ENCODE measurements at regions of chr16 and their contacts with region 1.

Region 1: GRCh38 chr16:49542391-49542891 is 168.8 kb downstream of the C16orf78 start:
- DNase-seq: peak; percentile 79 to 83
- ATAC-seq: peak; percentile 90 to 91
- H3K4me3 ChIP-seq: peak overlapping the region; percentile 12 to 42 (median 34)
- H3K27ac ChIP-seq: peak overlapping the region; percentile 83 to 86 (median 84)
- H3K4me1 ChIP-seq: peaks cover 55 to 62% of the 10 kb centered on the region in 2 donors
- H3K27me3 ChIP-seq: no peaks in the 10 kb centered on the region
- CTCF ChIP-seq: no peak
- POLR2A ChIP-seq: no peak

Region 2: GRCh38 chr16:49484451-49484849 is 58.0 kb before region 1 on chr16:
- in situ Hi-C with region 1: no loop called
- intact Hi-C with region 1: loop called (anchors 2 kb)
- DNase-seq: peak; percentile 62 to 82
- ATAC-seq: peak; percentile 90 to 94
- H3K4me3 ChIP-seq: peak overlapping the region; percentile 36 to 49 (median 48)
- H3K27ac ChIP-seq: peak overlapping the region; percentile 67 to 85 (median 80)
- H3K4me1 ChIP-seq: peaks cover 11 to 14% of the 10 kb centered on the region in 2 donors
- H3K27me3 ChIP-seq: no peaks in the 10 kb centered on the region
- CTCF ChIP-seq: no peak
- POLR2A ChIP-seq: peak in 1 of 2 donors; percentile 31

Region 3: GRCh38 chr16:49816875-49817274 is 274.4 kb after region 1 on chr16:
- in situ Hi-C with region 1: no loop called
- intact Hi-C with region 1: loop called (anchors 5 kb)
- DNase-seq: peak in 1 of 2 donors; percentile 56
- ATAC-seq: peak in 1 of 2 donors; percentile 53
- H3K4me3 ChIP-seq: no peak overlapping the region
- H3K27ac ChIP-seq: peak overlapping the region; percentile 65 to 97 (median 70)
- H3K4me1 ChIP-seq: peaks cover 69 to 75% of the 10 kb centered on the region in 2 donors
- H3K27me3 ChIP-seq: no peaks in the 10 kb centered on the region
- CTCF ChIP-seq: no peak
- POLR2A ChIP-seq: no peak

Measured in gastrocnemius medialis (tissue), 4 donors.